ENCODE measurements at regions of chr19 and their contacts with region 1.

Region 1: DNA sequence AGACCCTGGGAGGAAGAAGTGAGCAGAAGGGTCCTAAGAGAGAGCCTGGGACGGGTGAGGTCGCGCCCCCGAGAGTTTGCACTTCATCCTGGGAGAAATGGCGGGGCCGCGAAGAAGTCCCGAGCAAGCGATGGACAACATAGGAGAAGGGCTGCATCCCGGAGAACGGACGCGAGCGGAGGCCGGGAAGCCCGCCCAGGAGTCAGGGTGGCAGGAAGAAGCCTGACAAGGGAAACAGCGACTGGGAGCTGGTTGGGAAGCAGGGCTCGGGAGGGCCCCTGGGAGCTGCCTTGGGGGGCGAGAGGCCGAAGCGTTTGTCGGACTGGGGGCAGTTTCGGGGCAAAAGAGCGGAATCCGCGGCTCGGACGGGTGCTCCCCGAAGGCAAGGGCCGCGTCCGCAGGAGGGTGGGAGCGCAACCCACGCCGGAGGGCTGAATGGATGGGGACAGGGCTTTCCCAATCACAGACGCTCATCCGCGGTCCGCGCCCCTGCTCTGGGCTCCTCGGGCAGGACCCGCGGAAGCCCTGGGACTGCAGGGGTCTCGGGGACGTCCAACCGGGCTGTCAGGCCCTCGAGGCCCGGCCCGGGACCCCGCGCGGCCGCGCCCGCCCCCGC is 469 bp downstream of the ABHD17A start:
- DNase-seq: no peak

Region 2: DNA sequence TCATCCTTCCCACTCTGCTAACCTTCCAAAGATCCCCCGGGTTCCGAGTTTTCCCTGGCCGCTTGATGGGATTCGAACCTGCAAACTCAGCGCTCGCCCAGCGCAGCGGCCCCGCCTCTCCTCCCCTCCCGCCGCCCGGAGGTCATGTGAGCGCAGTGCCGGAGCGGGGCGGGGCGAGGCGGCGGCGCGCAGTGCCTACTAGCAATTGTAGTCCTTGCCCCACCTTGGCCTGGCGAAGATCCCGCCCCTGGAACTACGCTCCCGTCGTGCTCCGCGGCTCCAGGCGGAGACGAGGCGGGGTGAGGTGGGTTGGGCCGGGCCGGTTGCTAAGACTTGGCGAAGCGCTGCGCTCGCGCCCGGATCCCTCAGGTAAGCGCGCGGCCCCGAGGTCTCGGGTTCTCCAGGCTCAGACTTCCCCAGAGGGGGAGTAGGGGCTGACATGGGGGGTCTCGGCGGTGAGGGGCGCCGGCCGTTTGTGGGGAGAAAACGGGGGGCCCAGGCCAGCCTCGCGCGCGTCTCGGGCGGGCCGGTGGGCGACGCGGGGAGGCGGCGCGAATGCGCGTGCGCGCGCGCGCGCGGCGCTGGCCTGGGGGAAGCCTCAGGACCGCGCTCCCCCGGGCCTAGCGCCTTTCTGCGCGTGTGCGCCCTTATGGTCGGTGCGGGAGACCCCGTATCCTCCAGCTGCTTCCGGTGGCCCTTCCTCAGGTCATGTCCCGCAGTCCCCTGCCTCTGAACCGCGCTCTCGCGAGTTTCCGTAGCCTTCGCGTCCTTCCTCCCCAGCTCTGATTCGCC is 20.4 kb after region 1 on chr19 and contains the starts of genes ADAT3 and SCAMP4:
- intact Hi-C with region 1: loop called (anchors 2 kb)
- DNase-seq: peak; percentile 98 to 100 (median 99)

Region 3: GRCh38 chr19:2070436-2070827 is 185.6 kb after region 1 on chr19:
- intact Hi-C with region 1: no loop called
- DNase-seq: no peak

Measured in posterior cingulate gyrus (tissue), 11 donors.